ENCODE measurements at regions of chr14 and their contacts with region 1.

Region 1: GRCh38 chr14:20682435-20683124 is 1.8 kb upstream of the RNASE4 start:
- DNase-seq: peak; percentile 63 to 94 (median 80)
- ATAC-seq: peak; percentile 65
- H3K4me3 ChIP-seq: peak overlapping the region; percentile 67 to 93
- H3K4me3 Mint-ChIP-seq: no peak overlapping the region
- H3K27ac ChIP-seq: peak overlapping the region; percentile 80 to 90
- H3K27ac Mint-ChIP-seq: no peak overlapping the region
- H3K4me1 ChIP-seq: peaks cover 24% of the 10 kb centered on the region
- H3K4me1 Mint-ChIP-seq: peaks cover 29% of the 10 kb centered on the region
- H3K27me3 ChIP-seq: no peaks in the 10 kb centered on the region
- H3K27me3 Mint-ChIP-seq: no peaks in the 10 kb centered on the region
- CTCF ChIP-seq: no peak

Region 2: GRCh38 chr14:20332788-20333493 is 349.6 kb before region 1 on chr14 and contains the start of gene CCNB1IP1:
- CTCF ChIA-PET with region 1: interaction called, 14 read pairs
- POLR2A ChIA-PET with region 1: interaction called, 8 read pairs
- intact Hi-C with region 1: loop called in 1 of 2 experiments (anchors 2 kb)
- DNase-seq: peak in 8 of 9 experiments; percentile 20 to 91 (median 50)
- ATAC-seq: peak; percentile 98
- H3K4me3 ChIP-seq: peak within 1 kb of the TSS; percentile 56 to 72
- H3K4me3 Mint-ChIP-seq: peak within 1 kb of the TSS; percentile 93
- H3K27ac ChIP-seq: peak within 1 kb of the TSS; percentile 49 to 73
- H3K27ac Mint-ChIP-seq: peak within 1 kb of the TSS; percentile 88
- H3K4me1 ChIP-seq: peaks cover 7% of the 10 kb centered on the region
- H3K4me1 Mint-ChIP-seq: peaks cover 30% of the 10 kb centered on the region
- H3K27me3 ChIP-seq: no peaks in the 10 kb centered on the region
- H3K27me3 Mint-ChIP-seq: no peaks in the 10 kb centered on the region
- CTCF ChIP-seq: no peak
- total RNA-seq, gene CCNB1IP1: 26.9 to 28.0 TPM

Region 3: GRCh38 chr14:20376071-20376588 is 306.4 kb before region 1 on chr14:
- CTCF ChIA-PET with region 1: no interaction called
- POLR2A ChIA-PET with region 1: no interaction called
- intact Hi-C with region 1: no loop called
- DNase-seq: no peak
- ATAC-seq: no peak
- H3K4me3 ChIP-seq: no peak overlapping the region
- H3K4me3 Mint-ChIP-seq: no peak overlapping the region
- H3K27ac ChIP-seq: no peak overlapping the region
- H3K27ac Mint-ChIP-seq: no peak overlapping the region
- H3K4me1 ChIP-seq: no peaks in the 10 kb centered on the region
- H3K4me1 Mint-ChIP-seq: no peaks in the 10 kb centered on the region
- H3K27me3 ChIP-seq: no peaks in the 10 kb centered on the region
- H3K27me3 Mint-ChIP-seq: no peaks in the 10 kb centered on the region
- CTCF ChIP-seq: no peak

Region 4: GRCh38 chr14:20454516-20455354 is 227.8 kb before region 1 on chr14 and contains the starts of genes APEX1 and OSGEP:
- CTCF ChIA-PET with region 1: no interaction called
- POLR2A ChIA-PET with region 1: interaction called, 5 read pairs
- intact Hi-C with region 1: loop called (anchors 1 to 2 kb)
- DNase-seq: peak; percentile 96 to 100 (median 97)
- ATAC-seq: peak; percentile 80
- H3K4me3 ChIP-seq: peak within 1 kb of the TSS; percentile 73 to 82
- H3K4me3 Mint-ChIP-seq: no peak within 1 kb of the TSS
- H3K27ac ChIP-seq: peak within 1 kb of the TSS; percentile 89 to 96
- H3K27ac Mint-ChIP-seq: no peak within 1 kb of the TSS
- H3K4me1 ChIP-seq: peaks cover 32% of the 10 kb centered on the region
- H3K4me1 Mint-ChIP-seq: peaks cover 22% of the 10 kb centered on the region
- H3K27me3 ChIP-seq: no peaks in the 10 kb centered on the region
- H3K27me3 Mint-ChIP-seq: no peaks in the 10 kb centered on the region
- CTCF ChIP-seq: no peak
- total RNA-seq, gene APEX1: 120 to 123 TPM
- total RNA-seq, gene OSGEP: 40.7 to 47.4 TPM

Region 5: GRCh38 chr14:20632682-20633428 is 49.7 kb before region 1 on chr14:
- CTCF ChIA-PET with region 1: interaction called, 12 read pairs
- POLR2A ChIA-PET with region 1: interaction called, 33 read pairs
- intact Hi-C with region 1: loop called (anchors 2 kb)
- DNase-seq: peak in 7 of 9 experiments; percentile 19 to 83 (median 55)
- ATAC-seq: peak; percentile 65
- H3K4me3 ChIP-seq: peak overlapping the region; percentile 55 to 65
- H3K4me3 Mint-ChIP-seq: peak overlapping the region; percentile 90
- H3K27ac ChIP-seq: peak overlapping the region in 1 of 2 experiments; percentile 43
- H3K27ac Mint-ChIP-seq: peak overlapping the region; percentile 84
- H3K4me1 ChIP-seq: peaks cover 18% of the 10 kb centered on the region
- H3K4me1 Mint-ChIP-seq: peaks cover 52% of the 10 kb centered on the region
- H3K27me3 ChIP-seq: no peaks in the 10 kb centered on the region
- H3K27me3 Mint-ChIP-seq: peaks cover 9% of the 10 kb centered on the region
- CTCF ChIP-seq: no peak

Region 6: GRCh38 chr14:20697273-20698017 is 14.9 kb after region 1 on chr14:
- CTCF ChIA-PET with region 1: interaction called, 68 read pairs
- POLR2A ChIA-PET with region 1: no interaction called
- intact Hi-C with region 1: no loop called
- DNase-seq: peak; percentile 44 to 76 (median 60)
- ATAC-seq: peak; percentile 72
- H3K4me3 ChIP-seq: no peak overlapping the region
- H3K4me3 Mint-ChIP-seq: no peak overlapping the region
- H3K27ac ChIP-seq: no peak overlapping the region
- H3K27ac Mint-ChIP-seq: no peak overlapping the region
- H3K4me1 ChIP-seq: no peaks in the 10 kb centered on the region
- H3K4me1 Mint-ChIP-seq: no peaks in the 10 kb centered on the region
- H3K27me3 ChIP-seq: no peaks in the 10 kb centered on the region
- H3K27me3 Mint-ChIP-seq: no peaks in the 10 kb centered on the region
- CTCF ChIP-seq: peak; percentile 75

Measured in CD8-positive, alpha-beta T cell (primary cell).